CD4-positive, alpha-beta memory T cell (primary cell): ENCODE measurements at regions of chr12 and their contacts with region 1.

Region 1: GRCh38 chr12:121015825-121016766 is at the start of gene C12orf43:
- DNase-seq: peak; percentile 87 to 94 (median 89)
- H3K4me3 ChIP-seq: peak within 1 kb of the TSS; percentile 90 to 91
- H3K4me3 Mint-ChIP-seq: peak within 1 kb of the TSS; percentile 90 to 100 (median 96)
- H3K27ac ChIP-seq: peak within 1 kb of the TSS; percentile 71
- H3K27ac Mint-ChIP-seq: peak within 1 kb of the TSS; percentile 78 to 99 (median 97)
- H3K4me1 ChIP-seq: peaks cover 15% of the 10 kb centered on the region
- H3K4me1 Mint-ChIP-seq: peaks cover 17 to 29% (median 23%) of the 10 kb centered on the region in 4 donors
- H3K27me3 ChIP-seq: no peaks in the 10 kb centered on the region
- H3K27me3 Mint-ChIP-seq: no peaks in the 10 kb centered on the region
- total RNA-seq, gene C12orf43: 13.8 to 15.4 TPM

Region 2: DNA sequence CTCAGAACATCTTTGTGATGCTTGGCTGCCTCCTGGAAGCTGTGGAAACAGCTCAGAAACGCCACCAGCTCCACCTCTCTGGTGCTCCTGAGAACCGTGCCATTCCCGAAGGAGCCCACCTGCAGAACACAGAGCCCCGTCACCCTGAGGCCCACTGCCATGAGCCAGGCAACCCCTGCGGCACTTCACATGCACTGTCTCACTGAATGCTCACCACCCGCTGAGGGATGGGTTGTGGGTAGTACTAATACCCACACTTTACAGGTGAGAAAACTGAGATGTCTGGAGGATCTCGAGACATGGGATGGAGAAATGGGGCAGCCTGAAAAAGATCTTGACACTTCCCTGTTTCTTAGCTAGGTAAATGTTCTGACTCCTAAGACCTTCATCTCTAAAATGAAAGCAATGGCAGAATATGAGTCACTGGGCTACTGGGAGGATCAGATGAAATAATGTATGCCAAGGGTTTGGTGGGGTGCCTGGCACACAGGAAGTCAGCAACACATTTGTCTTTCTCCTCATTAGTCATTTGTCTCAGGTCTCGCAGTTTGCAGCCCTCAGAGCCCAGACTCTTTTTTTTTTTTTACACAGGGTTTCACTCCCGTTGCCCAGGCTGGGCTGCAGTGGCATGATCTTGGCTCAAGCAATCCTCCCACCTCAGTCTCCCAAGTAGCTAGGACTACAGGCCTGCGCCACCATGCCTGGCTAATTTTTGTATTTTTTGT is 17.7 kb after region 1 on chr12:
- CTCF ChIA-PET with region 1: no interaction called
- POLR2A ChIA-PET with region 1: interaction called, 15 read pairs
- intact Hi-C with region 1: loop called (anchors 1 kb)
- DNase-seq: peak; percentile 61 to 88 (median 74)
- H3K4me3 ChIP-seq: peak overlapping the region in 1 of 2 donors; percentile 6
- H3K4me3 Mint-ChIP-seq: peak overlapping the region; percentile 1 to 99 (median 72)
- H3K27ac ChIP-seq: peak overlapping the region; percentile 71
- H3K27ac Mint-ChIP-seq: peak overlapping the region; percentile 85 to 96 (median 94)
- H3K4me1 ChIP-seq: peaks cover 62% of the 10 kb centered on the region
- H3K4me1 Mint-ChIP-seq: peaks cover 34 to 63% (median 47%) of the 10 kb centered on the region in 4 donors
- H3K27me3 ChIP-seq: no peaks in the 10 kb centered on the region
- H3K27me3 Mint-ChIP-seq: no peaks in the 10 kb centered on the region

Region 3: GRCh38 chr12:121038861-121039666 is 23.0 kb after region 1 on chr12 and contains the start of gene OASL:
- CTCF ChIA-PET with region 1: no interaction called
- POLR2A ChIA-PET with region 1: interaction called, 15 read pairs
- intact Hi-C with region 1: loop called (anchors 1 kb)
- DNase-seq: peak; percentile 62 to 82 (median 62)
- H3K4me3 ChIP-seq: peak within 1 kb of the TSS; percentile 80 to 86
- H3K4me3 Mint-ChIP-seq: peak within 1 kb of the TSS; percentile 97 to 100 (median 98)
- H3K27ac ChIP-seq: peak within 1 kb of the TSS; percentile 78
- H3K27ac Mint-ChIP-seq: peak within 1 kb of the TSS; percentile 96 to 100 (median 98)
- H3K4me1 ChIP-seq: peaks cover 45% of the 10 kb centered on the region
- H3K4me1 Mint-ChIP-seq: peaks cover 28 to 65% (median 38%) of the 10 kb centered on the region in 4 donors
- H3K27me3 ChIP-seq: no peaks in the 10 kb centered on the region
- H3K27me3 Mint-ChIP-seq: peaks cover 3 to 5% of the 10 kb centered on the region in 2 donors
- total RNA-seq, gene OASL: 7.2 to 9.7 TPM